Calu3 (cell line): ENCODE measurements at regions of chr1 and their contacts with region 1.

Region 1: GRCh38 chr1:16206547-16207317 is 5.7 kb downstream of the ARHGEF19 start:
- DNase-seq: peak; percentile 95
- H3K4me3 Mint-ChIP-seq: peak overlapping the region; percentile 73
- H3K27ac Mint-ChIP-seq: peak overlapping the region; percentile 90
- H3K4me1 Mint-ChIP-seq: peaks cover 32% of the 10 kb centered on the region
- H3K27me3 Mint-ChIP-seq: no peaks in the 10 kb centered on the region
- CTCF ChIP-seq: no peak

Region 2: GRCh38 chr1:15918962-15919715 is 287.6 kb before region 1 on chr1:
- CTCF ChIA-PET with region 1: no interaction called
- intact Hi-C with region 1: no loop called
- DNase-seq: peak; percentile 21
- H3K4me3 Mint-ChIP-seq: no peak overlapping the region
- H3K27ac Mint-ChIP-seq: no peak overlapping the region
- H3K4me1 Mint-ChIP-seq: no peaks in the 10 kb centered on the region
- H3K27me3 Mint-ChIP-seq: no peaks in the 10 kb centered on the region
- CTCF ChIP-seq: no peak

Region 3: DNA sequence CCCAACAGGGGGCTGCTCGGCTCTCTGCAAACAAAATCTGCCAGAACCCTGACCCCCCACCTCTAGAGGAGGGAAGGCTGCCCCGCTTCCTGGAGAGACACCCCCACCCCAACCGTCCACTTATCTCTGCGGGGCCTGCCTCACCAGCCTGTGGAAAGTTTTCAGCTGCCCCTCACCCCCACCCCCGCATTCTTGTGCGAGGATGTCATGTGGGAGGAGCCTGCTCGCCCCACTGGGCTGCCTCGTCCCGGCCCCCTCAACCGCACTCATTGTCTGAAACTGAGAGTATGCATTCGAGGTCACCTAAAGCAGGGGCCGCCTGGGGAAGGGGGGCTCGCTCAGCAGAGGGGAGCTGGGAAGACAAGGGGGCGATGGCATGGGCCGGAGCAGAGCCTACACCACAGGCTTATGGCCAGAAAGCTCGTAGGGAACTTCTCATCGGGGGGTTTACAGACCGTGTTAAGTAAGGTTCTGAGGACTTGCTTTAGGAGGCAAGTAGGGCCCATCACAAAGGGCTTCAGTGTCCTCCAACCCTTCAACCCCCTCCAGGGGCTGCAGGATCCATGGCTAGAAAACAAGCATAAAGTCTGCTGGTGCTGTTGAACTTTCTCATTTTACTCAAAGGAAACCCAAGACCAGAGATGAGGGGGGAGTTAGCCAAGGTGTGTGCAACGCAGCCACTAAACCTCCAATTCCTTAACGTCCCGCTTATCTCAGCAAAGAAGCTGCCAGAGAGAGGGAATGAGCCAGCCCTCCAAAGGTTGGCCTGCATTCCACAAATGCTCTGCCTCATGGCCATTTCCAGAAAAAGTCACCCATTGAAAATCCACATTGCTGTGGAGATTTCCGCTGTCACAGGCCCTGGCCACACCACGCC is 60.2 kb before region 1 on chr1:
- CTCF ChIA-PET with region 1: no interaction called
- intact Hi-C with region 1: no loop called
- DNase-seq: peak; percentile 81
- H3K4me3 Mint-ChIP-seq: peak overlapping the region; percentile 71
- H3K27ac Mint-ChIP-seq: peak overlapping the region; percentile 91
- H3K4me1 Mint-ChIP-seq: peaks cover 48% of the 10 kb centered on the region
- H3K27me3 Mint-ChIP-seq: no peaks in the 10 kb centered on the region
- CTCF ChIP-seq: no peak

Region 4: DNA sequence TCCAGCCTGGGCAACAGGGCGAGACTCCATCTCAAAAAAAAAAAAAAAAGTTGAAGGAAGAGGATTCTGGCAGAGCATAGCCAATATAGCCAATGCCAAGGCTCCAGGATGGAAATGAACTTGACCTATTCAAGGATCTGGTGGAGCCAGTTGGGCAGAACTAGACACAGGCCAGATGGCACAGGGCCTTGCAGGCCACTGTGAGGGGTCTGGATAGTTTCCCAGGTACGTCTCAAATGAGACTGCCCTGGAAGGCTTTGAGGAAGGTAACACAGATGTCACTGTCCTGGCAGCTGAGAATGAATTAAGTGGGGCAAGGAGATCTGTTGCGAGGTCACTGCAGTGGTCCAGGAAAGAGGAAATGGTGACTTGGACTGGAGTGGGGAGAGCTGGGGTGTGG is 17.7 kb after region 1 on chr1:
- CTCF ChIA-PET with region 1: no interaction called
- intact Hi-C with region 1: no loop called
- DNase-seq: no peak
- H3K4me3 Mint-ChIP-seq: no peak overlapping the region
- H3K27ac Mint-ChIP-seq: no peak overlapping the region
- H3K4me1 Mint-ChIP-seq: no peaks in the 10 kb centered on the region
- H3K27me3 Mint-ChIP-seq: peaks cover 16% of the 10 kb centered on the region
- CTCF ChIP-seq: no peak

Region 5: GRCh38 chr1:16243936-16244649 is 37.4 kb after region 1 on chr1:
- CTCF ChIA-PET with region 1: interaction called, 3 read pairs
- intact Hi-C with region 1: loop called (anchors 5 kb)
- DNase-seq: peak; percentile 71
- H3K4me3 Mint-ChIP-seq: no peak overlapping the region
- H3K27ac Mint-ChIP-seq: no peak overlapping the region
- H3K4me1 Mint-ChIP-seq: peaks cover 17% of the 10 kb centered on the region
- H3K27me3 Mint-ChIP-seq: no peaks in the 10 kb centered on the region
- CTCF ChIP-seq: peak; percentile 63

Region 6: DNA sequence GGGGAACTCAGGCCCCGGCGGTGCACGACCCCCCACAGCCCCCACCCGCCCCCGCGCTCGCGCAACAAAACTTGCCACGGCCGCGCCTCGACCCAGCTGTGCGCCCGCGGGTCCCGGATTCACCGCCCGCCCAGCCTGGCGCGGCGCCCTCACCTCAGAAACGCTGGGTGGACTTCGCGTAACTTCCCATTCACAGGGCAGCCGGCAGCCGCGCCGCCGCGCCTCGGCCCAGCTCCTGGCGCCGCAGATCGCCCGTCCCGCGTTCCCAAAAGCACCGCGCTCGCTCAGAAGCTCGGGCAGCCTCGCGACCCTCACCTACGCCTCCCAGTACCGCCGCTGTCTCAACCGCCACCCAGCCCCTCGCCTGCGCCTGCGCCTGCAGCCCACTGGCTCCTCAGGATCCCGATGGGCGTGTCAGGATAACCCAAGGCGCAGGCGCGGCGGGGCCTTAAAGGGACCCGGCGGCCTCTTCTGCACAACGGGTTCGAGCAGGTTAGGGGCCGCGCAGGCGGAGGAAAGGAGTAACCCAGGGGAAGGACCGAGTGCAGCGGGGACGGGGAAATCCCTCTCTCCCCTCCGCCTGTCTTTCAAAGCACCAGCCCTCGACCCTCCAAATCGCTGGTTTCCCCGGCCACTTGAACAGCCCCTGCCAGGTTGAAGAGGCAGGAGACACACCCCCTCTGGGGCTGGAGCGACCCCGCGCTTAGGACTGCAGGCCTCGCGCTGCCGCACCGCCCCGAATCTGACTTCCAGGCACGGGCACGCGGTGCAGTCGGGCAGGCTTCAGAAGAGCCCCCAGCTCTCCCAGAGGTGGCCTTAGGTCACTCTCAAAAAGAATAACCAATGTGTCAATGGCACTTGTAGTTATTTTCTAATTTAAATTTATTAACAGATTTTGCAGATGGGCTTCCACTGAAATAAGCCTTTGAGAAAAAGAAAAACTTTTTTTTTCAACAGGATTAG is 406.7 kb after region 1 on chr1 and contains the start of gene NBPF1:
- CTCF ChIA-PET with region 1: no interaction called
- intact Hi-C with region 1: no loop called
- DNase-seq: peak; percentile 94
- H3K4me3 Mint-ChIP-seq: no peak within 1 kb of the TSS
- H3K27ac Mint-ChIP-seq: no peak within 1 kb of the TSS
- H3K4me1 Mint-ChIP-seq: no peaks in the 10 kb centered on the region
- H3K27me3 Mint-ChIP-seq: no peaks in the 10 kb centered on the region
- CTCF ChIP-seq: no peak
- total RNA-seq, gene NBPF1: 26.4 and 27.8 TPM in 2 replicates